PC-3 (cell line): ENCODE measurements at regions of chr6 and their contacts with region 1.

Region 1: DNA sequence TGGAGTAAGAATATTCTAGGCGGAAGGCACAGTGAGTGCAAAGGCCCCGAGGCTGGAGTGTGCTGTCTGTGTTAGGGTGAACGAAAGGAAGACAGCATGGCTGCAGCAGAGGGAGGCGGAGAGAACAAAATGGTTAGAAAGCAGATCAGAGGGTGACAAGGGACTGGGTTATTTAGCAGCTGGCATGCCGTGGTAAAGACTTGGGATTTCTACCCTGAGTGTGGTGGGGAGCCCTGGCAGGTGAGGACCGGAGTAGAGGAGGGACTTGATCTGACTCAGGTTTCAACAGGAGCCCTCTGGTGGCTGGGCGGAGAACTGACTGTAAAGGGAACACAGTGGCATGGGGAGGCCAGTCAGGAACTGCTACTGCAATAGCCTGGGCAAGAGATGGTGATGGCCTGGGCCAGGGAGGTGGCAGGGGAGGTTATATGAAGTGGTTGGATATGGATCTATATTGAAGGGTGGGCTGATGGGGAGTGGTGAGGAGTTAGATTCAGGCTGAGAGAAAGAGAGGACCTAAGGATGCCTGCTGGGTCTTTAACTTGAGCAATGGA is 38.0 kb downstream of the PIM1 start:
- DNase-seq: peak; percentile 90
- ATAC-seq: peak; percentile 80
- H3K4me3 ChIP-seq: no peak overlapping the region
- H3K27ac ChIP-seq: no peak overlapping the region
- H3K4me1 ChIP-seq: peaks cover 7% of the 10 kb centered on the region; the same call in 1 of the 2 replicates
- H3K27me3 ChIP-seq: no peaks in the 10 kb centered on the region
- CTCF ChIP-seq: peak; percentile 90

Region 2: GRCh38 chr6:36765594-36766398 is 442.2 kb before region 1 on chr6:
- CTCF ChIA-PET with region 1: no interaction called
- POLR2A ChIA-PET with region 1: no interaction called
- intact Hi-C with region 1: loop called (anchors 10 kb)
- DNase-seq: peak; percentile 90
- ATAC-seq: peak; percentile 75
- H3K4me3 ChIP-seq: no peak overlapping the region
- H3K27ac ChIP-seq: no peak overlapping the region
- H3K4me1 ChIP-seq: peaks cover 25% of the 10 kb centered on the region
- H3K27me3 ChIP-seq: no peaks in the 10 kb centered on the region
- CTCF ChIP-seq: peak; percentile 97

Region 3: GRCh38 chr6:37029249-37029971 is 178.6 kb before region 1 on chr6:
- CTCF ChIA-PET with region 1: interaction called, 14 read pairs
- POLR2A ChIA-PET with region 1: interaction called, 5 read pairs
- intact Hi-C with region 1: no loop called
- DNase-seq: peak; percentile 91
- ATAC-seq: peak; percentile 93
- H3K4me3 ChIP-seq: no peak overlapping the region
- H3K27ac ChIP-seq: peak overlapping the region; percentile 56
- H3K4me1 ChIP-seq: peaks cover 23% of the 10 kb centered on the region
- H3K27me3 ChIP-seq: no peaks in the 10 kb centered on the region
- CTCF ChIP-seq: peak; percentile 79

Region 4: DNA sequence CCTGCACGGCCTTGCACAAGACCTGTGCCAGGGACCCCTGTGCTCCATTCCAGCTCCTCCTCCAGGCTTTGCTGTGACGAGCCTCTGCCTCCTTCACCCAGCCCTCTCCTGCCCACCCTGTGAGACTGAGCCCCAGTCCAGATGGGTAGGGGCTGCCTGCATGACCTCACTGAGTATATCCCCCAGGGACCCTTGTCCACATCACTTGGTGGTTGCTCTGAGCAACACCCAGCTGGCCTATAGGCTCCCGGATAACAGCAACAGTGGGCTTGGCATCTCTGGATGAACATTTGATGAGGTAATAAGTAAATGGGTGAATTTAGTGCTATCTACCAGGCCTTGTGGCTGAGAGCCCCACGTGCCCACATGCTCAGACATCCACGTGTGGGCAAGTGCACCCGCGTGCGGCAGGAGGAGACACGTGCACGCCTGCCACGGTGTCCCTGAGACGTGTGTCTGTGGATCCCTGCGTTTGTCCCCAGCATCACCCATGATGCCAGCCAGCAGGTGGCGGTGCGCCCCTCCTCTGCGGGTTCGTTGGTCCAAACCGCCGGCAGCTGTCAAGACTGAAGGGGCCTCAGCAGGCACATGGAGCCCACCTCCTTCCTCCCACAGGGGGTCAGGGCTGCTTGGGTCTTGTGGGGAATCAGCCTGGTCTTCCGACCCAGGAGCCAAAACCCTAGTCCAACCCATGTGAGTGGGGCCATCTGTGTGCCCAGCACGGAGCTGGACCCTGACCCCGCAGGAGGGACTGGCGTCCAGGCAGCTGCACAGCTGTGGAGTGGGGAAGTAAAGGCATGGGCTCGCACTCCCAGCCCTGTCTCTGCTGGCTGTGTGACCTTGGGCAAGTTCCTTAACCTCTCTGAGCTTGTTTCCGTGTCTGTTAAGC is 156.6 kb before region 1 on chr6:
- CTCF ChIA-PET with region 1: interaction called, 17 read pairs
- POLR2A ChIA-PET with region 1: no interaction called
- intact Hi-C with region 1: loop called (anchors 1 kb)
- DNase-seq: peak; percentile 86
- ATAC-seq: peak; percentile 68
- H3K4me3 ChIP-seq: no peak overlapping the region
- H3K27ac ChIP-seq: no peak overlapping the region
- H3K4me1 ChIP-seq: peaks cover 26% of the 10 kb centered on the region
- H3K27me3 ChIP-seq: no peaks in the 10 kb centered on the region
- CTCF ChIP-seq: peak; percentile 96

Region 5: GRCh38 chr6:38915205-38915925 is 1707.4 kb after region 1 on chr6:
- CTCF ChIA-PET with region 1: no interaction called
- POLR2A ChIA-PET with region 1: no interaction called
- intact Hi-C with region 1: no loop called
- DNase-seq: no peak
- ATAC-seq: no peak
- H3K4me3 ChIP-seq: no peak overlapping the region
- H3K27ac ChIP-seq: no peak overlapping the region
- H3K4me1 ChIP-seq: no peaks in the 10 kb centered on the region
- H3K27me3 ChIP-seq: peaks cover 24% of the 10 kb centered on the region
- CTCF ChIP-seq: no peak